ENCODE measurements at regions of chr7 and their contacts with region 1.

Region 1: GRCh38 chr7:134593530-134594392 is 44.9 kb downstream of the AKR1B15 start:
- DNase-seq: peak; percentile 90 to 97
- H3K4me3 ChIP-seq: peak overlapping the region; percentile 1; the same call in 1 of the 2 replicates
- H3K27ac ChIP-seq: peak overlapping the region; percentile 95
- H3K4me1 ChIP-seq: peaks cover 65% of the 10 kb centered on the region
- H3K27me3 ChIP-seq: no peaks in the 10 kb centered on the region
- CTCF ChIP-seq: no peak

Region 2: DNA sequence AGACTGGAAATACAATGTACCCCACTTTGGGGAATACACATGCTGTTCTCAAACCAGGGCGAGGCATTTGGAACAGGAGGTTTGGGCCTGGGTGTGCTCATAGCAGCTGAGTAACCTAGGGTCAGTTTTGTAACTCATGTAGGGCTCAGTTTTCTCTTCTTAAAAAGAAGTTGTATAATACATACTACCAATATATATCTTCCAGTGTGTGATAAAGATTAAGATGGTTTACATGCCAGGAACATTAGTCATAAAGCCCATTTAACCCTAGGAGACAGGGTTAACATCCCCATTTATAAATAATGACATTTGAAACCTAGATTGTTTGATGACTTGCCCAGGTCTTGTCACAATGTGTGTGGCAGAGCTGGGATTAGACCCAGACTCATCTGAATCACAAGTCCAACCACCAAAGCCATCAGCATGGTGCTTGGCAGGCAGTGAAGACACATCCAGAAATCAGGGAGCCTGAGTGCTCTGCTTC is 60.4 kb before region 1 on chr7:
- CTCF ChIA-PET with region 1: no interaction called
- POLR2A ChIA-PET with region 1: interaction called, 11 read pairs
- intact Hi-C with region 1: loop called (anchors 2 kb)
- DNase-seq: peak; percentile 44 to 95
- H3K4me3 ChIP-seq: peak overlapping the region; percentile 87
- H3K27ac ChIP-seq: peak overlapping the region; percentile 96
- H3K4me1 ChIP-seq: peaks cover 56% of the 10 kb centered on the region
- H3K27me3 ChIP-seq: no peaks in the 10 kb centered on the region
- CTCF ChIP-seq: no peak

Region 3: GRCh38 chr7:134542195-134542771 is 51.5 kb before region 1 on chr7:
- CTCF ChIA-PET with region 1: no interaction called
- POLR2A ChIA-PET with region 1: interaction called, 10 read pairs
- intact Hi-C with region 1: loop called (anchors 1 kb)
- DNase-seq: no peak
- H3K4me3 ChIP-seq: no peak overlapping the region
- H3K27ac ChIP-seq: peak overlapping the region; percentile 47
- H3K4me1 ChIP-seq: peaks cover 11% of the 10 kb centered on the region
- H3K27me3 ChIP-seq: no peaks in the 10 kb centered on the region
- CTCF ChIP-seq: no peak

Region 4: DNA sequence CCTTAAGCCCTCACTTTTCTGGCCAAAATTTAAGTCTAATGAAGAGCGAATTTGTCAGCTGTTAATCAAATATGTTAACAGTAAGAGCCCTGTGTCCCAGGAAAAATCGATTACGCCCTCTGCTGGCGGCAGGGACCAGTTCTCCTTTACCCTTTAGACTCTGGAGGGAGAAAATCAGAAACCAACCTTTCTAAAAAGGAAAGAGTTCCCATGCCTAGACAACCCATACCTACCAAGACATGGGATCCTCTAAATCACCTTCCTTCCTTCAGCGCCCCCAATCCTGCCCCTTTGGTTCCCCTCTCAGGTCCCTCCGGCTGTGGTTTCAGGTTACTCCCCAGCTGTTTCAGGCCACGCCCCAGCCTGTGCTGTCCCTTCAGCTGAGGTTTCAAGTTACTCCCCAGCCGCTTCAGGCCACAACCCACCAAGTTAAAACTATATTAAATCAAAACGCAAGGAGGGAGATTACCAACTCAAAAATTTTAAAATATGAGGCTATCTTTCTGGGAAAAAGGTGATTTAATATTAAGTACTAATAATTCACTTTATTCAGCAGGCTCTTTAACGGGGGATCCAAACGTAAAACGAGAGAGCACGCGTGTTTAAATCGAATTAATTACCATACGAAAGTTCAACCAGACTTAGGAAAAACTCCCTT is 46.2 kb before region 1 on chr7:
- CTCF ChIA-PET with region 1: no interaction called
- POLR2A ChIA-PET with region 1: no interaction called
- intact Hi-C with region 1: loop called (anchors 1 kb)
- DNase-seq: peak; percentile 75 to 77
- H3K4me3 ChIP-seq: peak overlapping the region; percentile 20; the same call in 1 of the 2 replicates
- H3K27ac ChIP-seq: peak overlapping the region; percentile 84
- H3K4me1 ChIP-seq: peaks cover 42% of the 10 kb centered on the region
- H3K27me3 ChIP-seq: no peaks in the 10 kb centered on the region
- CTCF ChIP-seq: peak; percentile 97

Region 5: DNA sequence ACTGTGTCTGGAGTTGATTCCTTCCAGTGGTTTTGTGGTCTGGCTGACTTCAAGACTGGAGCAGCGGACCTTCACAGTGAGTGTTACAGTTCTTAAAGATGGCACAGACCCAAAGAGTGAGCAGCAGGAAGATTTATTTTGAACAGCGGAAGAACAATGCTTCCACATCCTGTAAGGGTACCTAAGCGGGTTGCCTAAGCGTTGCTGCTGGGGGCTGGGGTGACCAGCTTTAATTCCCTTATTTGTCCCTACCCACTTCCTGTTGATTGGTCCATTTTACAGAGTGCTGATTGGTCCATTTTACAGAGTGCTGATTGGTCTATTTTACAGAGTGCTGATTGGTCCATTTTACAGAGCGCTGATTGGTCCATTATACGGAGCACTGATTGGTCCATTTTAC is 31.6 kb before region 1 on chr7:
- CTCF ChIA-PET with region 1: interaction called, 5 read pairs
- POLR2A ChIA-PET with region 1: no interaction called
- intact Hi-C with region 1: loop called (anchors 1 kb)
- DNase-seq: no peak
- H3K4me3 ChIP-seq: no peak overlapping the region
- H3K27ac ChIP-seq: peak overlapping the region; percentile 95
- H3K4me1 ChIP-seq: peaks cover 43% of the 10 kb centered on the region
- H3K27me3 ChIP-seq: no peaks in the 10 kb centered on the region
- CTCF ChIP-seq: no peak

Region 6: GRCh38 chr7:134605973-134606923 is 12.5 kb after region 1 on chr7:
- CTCF ChIA-PET with region 1: no interaction called
- POLR2A ChIA-PET with region 1: no interaction called
- intact Hi-C with region 1: loop called (anchors 2 kb)
- DNase-seq: peak; percentile 70 to 92
- H3K4me3 ChIP-seq: no peak overlapping the region
- H3K27ac ChIP-seq: peak overlapping the region; percentile 80
- H3K4me1 ChIP-seq: peaks cover 32% of the 10 kb centered on the region
- H3K27me3 ChIP-seq: no peaks in the 10 kb centered on the region
- CTCF ChIP-seq: peak; percentile 99

Measured in PC-9 (cell line).